Activated B cell treated with CpG ODN at 0.5 μM for 24 hours (primary cell): ENCODE measurements at regions of chrX and their contacts with region 1.

Region 1: GRCh38 chrX:40570346-40571093 is 10.2 kb upstream of the ATP6AP2 start:
- DNase-seq: peak; percentile 15
- ATAC-seq: peak; percentile 62
- H3K4me3 Mint-ChIP-seq: peak overlapping the region; percentile 79
- H3K27ac Mint-ChIP-seq: peak overlapping the region; percentile 77
- H3K4me1 Mint-ChIP-seq: peaks cover 19% of the 10 kb centered on the region
- H3K27me3 Mint-ChIP-seq: no peaks in the 10 kb centered on the region
- CTCF ChIP-seq: no peak

Region 2: GRCh38 chrX:40580537-40581335 is 10.2 kb after region 1 on chrX and contains the start of gene ATP6AP2:
- CTCF ChIA-PET with region 1: no interaction called
- POLR2A ChIA-PET with region 1: interaction called, 12 read pairs
- intact Hi-C with region 1: no loop called
- DNase-seq: peak; percentile 71
- ATAC-seq: peak; percentile 95
- H3K4me3 Mint-ChIP-seq: peak within 1 kb of the TSS; percentile 92
- H3K27ac Mint-ChIP-seq: peak within 1 kb of the TSS; percentile 94
- H3K4me1 Mint-ChIP-seq: peaks cover 27% of the 10 kb centered on the region
- H3K27me3 Mint-ChIP-seq: no peaks in the 10 kb centered on the region
- CTCF ChIP-seq: no peak
- total RNA-seq, gene ATP6AP2: 48.6 and 53.8 TPM in 2 replicates